ENCODE measurements at regions of chr11 and their contacts with region 1.

Region 1: DNA sequence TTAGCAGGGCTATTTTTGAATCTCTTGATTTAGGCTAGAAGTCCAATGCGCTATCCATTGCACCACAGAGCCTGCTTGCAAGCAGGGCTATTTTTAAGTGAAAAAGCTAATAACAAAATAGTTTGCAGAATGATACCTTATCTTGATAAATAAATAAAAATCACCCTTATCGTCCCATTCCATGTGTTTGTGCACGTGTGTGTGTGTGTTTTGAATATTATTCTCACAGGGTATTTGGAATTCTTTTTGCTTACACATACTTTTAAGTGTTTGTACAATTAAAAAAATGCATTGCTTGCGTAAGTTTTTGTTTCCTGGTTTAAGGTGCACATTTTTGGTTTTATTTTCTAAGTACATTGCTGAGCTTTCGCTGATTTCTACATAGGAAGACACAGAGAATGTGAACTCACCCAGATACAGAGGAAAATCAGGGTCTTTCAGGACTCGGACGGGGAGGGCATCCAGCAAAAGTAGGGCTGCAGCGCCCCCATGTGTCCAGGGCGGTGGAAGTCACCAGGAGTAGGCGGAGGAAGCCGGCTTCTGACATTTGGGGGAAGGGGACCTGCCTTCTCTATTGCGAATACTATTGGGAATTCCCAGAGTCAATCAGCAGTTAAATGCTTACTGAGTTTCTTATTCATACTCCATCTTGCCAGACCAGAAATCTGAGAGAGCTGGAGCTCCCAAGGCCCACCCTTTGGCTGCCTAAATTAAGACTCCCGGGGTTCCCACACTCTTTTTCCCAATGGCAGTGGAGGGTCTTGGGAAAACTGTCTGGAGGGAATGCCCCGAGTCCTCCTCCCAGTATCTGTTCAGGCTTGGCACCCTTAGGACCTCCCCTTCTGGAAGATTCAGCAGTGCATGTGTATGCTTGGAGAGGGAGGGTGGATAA is 27.2 kb downstream of the SLC1A2 start:
- DNase-seq: peak; percentile 79 to 94 (median 86)
- ATAC-seq: peak; percentile 92
- H3K4me3 ChIP-seq: peak overlapping the region in 1 of 2 donors; percentile 4
- H3K27ac ChIP-seq: peak overlapping the region in 1 of 2 donors; percentile 57
- H3K4me1 ChIP-seq: peaks cover 0 to 25% of the 10 kb centered on the region in 2 donors
- H3K27me3 ChIP-seq: no peaks in the 10 kb centered on the region
- CTCF ChIP-seq: peak; percentile 71 to 91

Region 2: DNA sequence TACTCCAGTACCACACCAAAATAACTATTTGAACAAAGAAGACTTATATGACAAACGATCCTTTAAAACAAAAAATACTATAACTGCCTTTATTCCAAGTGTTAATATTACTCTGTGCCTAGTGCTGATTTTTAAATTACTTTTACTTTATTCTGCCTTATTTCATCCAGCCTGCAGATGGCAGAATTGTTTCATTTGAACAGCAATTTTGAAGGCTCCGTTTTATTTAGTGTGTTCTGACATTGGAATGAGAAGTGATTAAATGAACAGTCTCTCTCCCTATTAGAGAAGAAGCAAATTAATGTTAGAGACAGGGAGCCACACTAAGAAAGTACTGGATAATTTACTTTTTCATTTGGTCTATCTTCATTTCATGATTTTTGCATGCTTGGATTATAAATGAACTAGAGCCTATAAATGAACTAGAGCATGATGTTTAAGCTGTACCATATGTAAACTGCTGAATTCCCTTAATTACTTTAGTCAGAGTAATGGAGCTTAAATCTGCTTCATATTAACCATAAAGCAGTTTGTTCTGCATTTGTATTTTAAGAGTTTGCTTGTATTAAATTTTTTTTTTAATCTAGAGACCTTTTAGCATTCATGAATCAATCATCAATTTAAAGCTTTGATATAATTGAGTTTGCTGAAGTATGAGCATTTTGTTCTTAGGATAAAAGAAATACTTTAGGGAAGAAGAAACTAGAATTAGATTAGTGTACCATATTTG is 465.9 kb before region 1 on chr11:
- intact Hi-C with region 1: loop called in 1 of 2 experiments (anchors 10 kb)
- DNase-seq: peak in 2 of 4 donors; percentile 53 to 63
- ATAC-seq: peak; percentile 85
- H3K4me3 ChIP-seq: no peak overlapping the region
- H3K27ac ChIP-seq: peak overlapping the region in 1 of 2 donors; percentile 21
- H3K4me1 ChIP-seq: peaks cover 10 to 58% of the 10 kb centered on the region in 2 donors
- H3K27me3 ChIP-seq: no peaks in the 10 kb centered on the region
- CTCF ChIP-seq: peak; percentile 51 to 61

Region 3: DNA sequence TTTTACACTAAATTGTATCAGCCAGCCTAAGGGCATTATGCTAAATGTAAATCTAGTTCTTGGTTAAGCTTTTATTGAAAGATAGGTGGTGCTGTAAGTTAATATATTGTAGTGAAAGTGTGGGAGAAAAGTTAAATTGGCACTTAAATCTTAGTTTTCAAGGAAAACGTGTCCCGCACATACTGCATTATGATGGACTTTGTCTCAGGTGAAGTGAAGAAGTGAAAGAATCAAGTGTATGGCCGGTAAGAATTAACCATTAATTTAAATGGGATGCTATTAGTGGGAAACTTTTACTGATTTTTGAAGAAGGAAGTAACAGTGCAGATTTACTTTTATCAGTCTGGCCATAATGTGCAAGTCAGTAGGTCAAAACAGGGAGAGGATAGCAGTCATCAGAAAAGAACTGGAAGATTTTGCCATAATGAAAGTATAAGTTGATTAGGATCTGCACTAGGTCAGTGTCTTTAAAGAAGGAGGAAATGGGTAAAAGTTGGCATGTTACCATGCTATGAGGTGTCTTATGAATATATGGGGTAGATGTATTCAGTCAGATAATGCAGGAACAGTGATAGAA is 394.1 kb before region 1 on chr11:
- intact Hi-C with region 1: loop called in 1 of 2 experiments (anchors 5 kb)
- DNase-seq: no peak
- ATAC-seq: peak; percentile 71
- H3K4me3 ChIP-seq: no peak overlapping the region
- H3K27ac ChIP-seq: no peak overlapping the region
- H3K4me1 ChIP-seq: peaks cover 3 to 11% of the 10 kb centered on the region in 2 donors
- H3K27me3 ChIP-seq: no peaks in the 10 kb centered on the region
- CTCF ChIP-seq: peak; percentile 43 to 48

Measured in left lung (tissue), 14 donors.